ENCODE measurements at regions of chr19 and their contacts with region 1.

Region 1: GRCh38 chr19:54159352-54160181 is at the start of gene LENG1:
- DNase-seq: peak; percentile 99
- H3K4me3 Mint-ChIP-seq: peak within 1 kb of the TSS; percentile 91
- H3K27ac Mint-ChIP-seq: peak within 1 kb of the TSS; percentile 99
- H3K4me1 Mint-ChIP-seq: peaks cover 49% of the 10 kb centered on the region
- H3K27me3 Mint-ChIP-seq: no peaks in the 10 kb centered on the region
- total RNA-seq, gene LENG1: 4.6 and 5.7 TPM in 2 replicates

Region 2: GRCh38 chr19:54102421-54103169 is 57.0 kb before region 1 on chr19 and contains the start of gene NDUFA3:
- intact Hi-C with region 1: loop called (anchors 1 kb)
- DNase-seq: peak; percentile 99
- H3K4me3 Mint-ChIP-seq: peak within 1 kb of the TSS; percentile 99
- H3K27ac Mint-ChIP-seq: peak within 1 kb of the TSS; percentile 97
- H3K4me1 Mint-ChIP-seq: peaks cover 22% of the 10 kb centered on the region
- H3K27me3 Mint-ChIP-seq: no peaks in the 10 kb centered on the region
- total RNA-seq, gene NDUFA3: 105 and 131 TPM in 2 replicates

Region 3: DNA sequence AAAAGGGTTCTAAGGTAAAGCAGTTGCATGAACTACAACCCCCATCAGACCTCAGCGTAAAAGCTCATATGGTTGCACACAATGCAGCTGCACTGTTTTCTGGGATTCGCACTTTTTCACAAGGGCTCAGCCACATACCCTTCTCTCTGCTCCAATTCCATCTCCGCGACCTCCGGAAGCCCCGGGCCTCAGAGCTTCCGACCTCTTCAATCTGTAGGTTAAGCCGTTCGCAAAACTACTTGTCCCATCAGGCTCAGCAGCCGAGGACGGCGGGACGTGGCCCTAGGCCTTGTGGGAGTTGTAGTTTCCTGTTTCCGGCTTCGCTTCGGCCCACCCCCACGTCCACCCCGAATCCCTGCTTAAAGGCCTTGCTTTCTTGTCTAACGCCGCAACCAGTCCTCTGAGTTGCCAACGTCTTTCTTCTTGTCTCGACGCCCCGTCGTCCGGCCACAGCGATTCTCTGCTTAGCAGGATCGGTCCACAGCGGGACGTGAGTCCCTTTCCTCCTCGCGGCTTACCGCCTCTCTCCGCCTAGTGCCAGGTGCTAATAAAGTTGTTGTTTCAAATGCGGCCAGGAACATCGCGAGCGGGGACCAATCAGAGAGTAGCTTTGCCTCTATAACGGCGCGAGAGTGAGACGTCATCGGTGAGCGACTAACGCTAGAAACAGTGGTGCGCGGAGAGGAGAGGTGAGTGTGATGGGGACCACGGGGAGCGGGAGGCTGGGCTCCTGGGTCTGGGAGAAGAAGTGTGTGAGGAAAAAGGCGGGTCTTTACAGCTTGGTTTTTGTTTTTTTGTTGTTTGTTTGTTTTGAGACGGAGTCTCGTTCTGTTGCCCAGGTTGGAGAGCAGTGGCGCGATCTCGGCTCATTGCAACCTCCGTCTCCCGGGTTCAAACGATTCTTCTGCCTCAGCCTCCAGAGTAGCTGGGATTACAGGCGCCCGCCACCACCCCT is 44.2 kb before region 1 on chr19 and contains the starts of genes PRPF31 and TFPT:
- intact Hi-C with region 1: loop called (anchors 1 kb)
- DNase-seq: peak; percentile 99
- H3K4me3 Mint-ChIP-seq: peak within 1 kb of the TSS; percentile 89
- H3K27ac Mint-ChIP-seq: peak within 1 kb of the TSS; percentile 87
- H3K4me1 Mint-ChIP-seq: peaks cover 24% of the 10 kb centered on the region
- H3K27me3 Mint-ChIP-seq: peaks cover 2% of the 10 kb centered on the region
- total RNA-seq, gene PRPF31: 110 and 115 TPM in 2 replicates
- total RNA-seq, gene TFPT: 31.0 and 33.7 TPM in 2 replicates

Region 4: DNA sequence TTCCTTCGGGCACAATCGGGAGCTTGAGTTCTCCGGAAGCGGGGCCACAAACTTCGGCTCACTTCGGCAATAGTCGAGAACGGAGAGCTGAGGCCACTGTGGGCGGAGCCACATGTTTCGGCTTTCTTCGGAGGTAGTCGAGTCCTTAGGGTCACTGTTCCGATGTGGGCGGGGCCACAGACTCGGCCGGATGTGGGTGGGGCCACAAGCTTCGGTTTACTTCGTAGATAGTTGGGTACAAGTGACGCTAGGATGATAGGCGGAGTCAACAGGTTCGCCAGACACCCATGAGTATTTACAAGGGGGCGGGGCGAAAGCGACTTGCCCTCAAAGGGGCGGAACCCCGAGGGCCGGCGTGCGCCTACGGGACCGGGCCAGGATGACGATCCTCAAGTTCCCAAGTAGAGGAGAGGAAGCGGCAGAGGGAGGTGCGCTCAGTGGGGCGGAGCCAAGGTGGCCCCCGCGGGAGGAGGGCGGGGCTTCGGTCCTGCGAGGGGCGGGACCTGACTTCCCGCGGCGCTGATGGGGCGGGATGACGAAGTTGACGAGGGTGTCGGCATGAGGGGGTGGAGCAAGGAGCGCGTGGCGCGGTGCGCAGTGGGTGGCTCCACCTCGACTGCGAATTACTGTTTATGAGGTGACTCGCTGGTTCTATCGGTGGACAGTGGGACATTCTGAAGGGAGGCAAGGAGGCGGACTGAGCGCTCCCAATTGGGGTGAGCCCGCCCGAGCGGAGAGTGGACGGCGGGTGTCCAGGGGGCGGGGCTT is 30.4 kb after region 1 on chr19:
- intact Hi-C with region 1: loop called (anchors 1 kb)
- DNase-seq: peak; percentile 100
- H3K4me3 Mint-ChIP-seq: peak overlapping the region; percentile 85
- H3K27ac Mint-ChIP-seq: peak overlapping the region; percentile 98
- H3K4me1 Mint-ChIP-seq: peaks cover 28% of the 10 kb centered on the region
- H3K27me3 Mint-ChIP-seq: no peaks in the 10 kb centered on the region

Region 5: GRCh38 chr19:54203151-54203611 is 43.6 kb after region 1 on chr19:
- intact Hi-C with region 1: loop called (anchors 1 kb)
- DNase-seq: no peak
- H3K4me3 Mint-ChIP-seq: peak overlapping the region; percentile 95
- H3K27ac Mint-ChIP-seq: peak overlapping the region; percentile 74
- H3K4me1 Mint-ChIP-seq: peaks cover 67% of the 10 kb centered on the region
- H3K27me3 Mint-ChIP-seq: no peaks in the 10 kb centered on the region

Region 6: GRCh38 chr19:54448774-54449700 is 289.5 kb after region 1 on chr19 and contains the start of gene LENG8:
- intact Hi-C with region 1: loop called (anchors 5 kb)
- DNase-seq: peak; percentile 99
- H3K4me3 Mint-ChIP-seq: peak within 1 kb of the TSS; percentile 96
- H3K27ac Mint-ChIP-seq: peak within 1 kb of the TSS; percentile 100
- H3K4me1 Mint-ChIP-seq: peaks cover 31% of the 10 kb centered on the region
- H3K27me3 Mint-ChIP-seq: peaks cover 2% of the 10 kb centered on the region
- total RNA-seq, gene LENG8: 202 and 214 TPM in 2 replicates

Measured in activated CD4-positive, alpha-beta T cell treated with anti-CD3 and anti-CD28 coated beads, Interleukin-2, amount 10 ng/mL, durations not matched to agents 24 days and 14 days (primary cell).